HepG2 (cell line): ENCODE measurements at regions of chr4 and their contacts with region 1.

Region 1: DNA sequence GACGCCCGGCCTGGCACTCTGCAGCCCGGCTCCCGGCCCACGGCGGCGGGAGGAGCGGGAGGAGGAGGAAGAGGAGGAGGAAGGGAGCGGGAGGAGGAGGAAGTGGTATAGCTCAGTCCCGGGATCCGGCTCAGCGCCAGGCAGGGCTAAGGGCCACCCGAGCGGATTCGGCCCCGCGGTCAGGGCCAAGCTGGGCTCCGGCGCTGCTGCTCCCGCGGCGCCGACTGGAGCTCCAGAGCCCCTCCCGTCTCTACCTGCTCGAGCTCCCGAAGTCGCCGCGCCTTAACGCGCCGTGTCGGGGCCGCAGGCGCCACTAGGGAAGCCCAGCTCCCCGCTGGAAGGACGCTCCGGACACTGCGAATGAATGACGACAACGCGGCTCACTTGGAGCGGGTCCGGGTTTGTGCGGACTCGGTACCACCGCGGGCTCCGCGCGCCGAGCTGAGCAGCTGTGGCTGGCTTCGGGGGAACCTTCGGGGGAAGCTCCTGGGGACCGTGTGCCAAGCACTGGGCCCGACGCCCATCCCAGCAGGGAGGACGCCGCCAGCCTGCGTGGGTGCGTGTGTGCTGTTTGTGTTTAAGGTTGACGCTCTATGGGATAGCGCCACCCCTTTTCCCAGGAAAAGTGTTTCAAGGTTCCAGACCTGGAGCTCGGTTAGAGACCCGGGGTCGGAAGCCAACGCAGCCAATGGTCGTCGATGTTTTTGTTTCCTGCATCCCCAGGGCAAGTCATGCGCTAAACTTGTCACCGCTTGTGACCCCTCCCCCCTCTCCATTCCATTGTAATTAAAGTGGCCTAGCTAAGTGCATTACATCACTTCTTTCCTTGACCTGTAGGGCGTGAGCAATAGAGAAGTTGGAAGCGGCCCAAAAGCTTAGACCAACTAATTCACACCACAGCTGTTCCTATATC is at the start of gene TBC1D9:
- DNase-seq: peak; percentile 68
- ATAC-seq: peak; percentile 80
- H3K4me3 ChIP-seq: peak within 1 kb of the TSS; percentile 82 to 91 (median 88)
- H3K27ac ChIP-seq: peak within 1 kb of the TSS; percentile 69
- H3K4me1 ChIP-seq: peaks cover 38% of the 10 kb centered on the region
- H3K27me3 ChIP-seq: no peaks in the 10 kb centered on the region
- CTCF ChIP-seq: peak; percentile 68
- EP300 ChIP-seq: no peak
- POLR2A ChIP-seq: peak; percentile 58 to 77
- RAD21 ChIP-seq: no peak; the same call in 1 of the 2 replicates
- total RNA-seq, gene TBC1D9: 12.2 TPM in 2 replicates

Region 2: DNA sequence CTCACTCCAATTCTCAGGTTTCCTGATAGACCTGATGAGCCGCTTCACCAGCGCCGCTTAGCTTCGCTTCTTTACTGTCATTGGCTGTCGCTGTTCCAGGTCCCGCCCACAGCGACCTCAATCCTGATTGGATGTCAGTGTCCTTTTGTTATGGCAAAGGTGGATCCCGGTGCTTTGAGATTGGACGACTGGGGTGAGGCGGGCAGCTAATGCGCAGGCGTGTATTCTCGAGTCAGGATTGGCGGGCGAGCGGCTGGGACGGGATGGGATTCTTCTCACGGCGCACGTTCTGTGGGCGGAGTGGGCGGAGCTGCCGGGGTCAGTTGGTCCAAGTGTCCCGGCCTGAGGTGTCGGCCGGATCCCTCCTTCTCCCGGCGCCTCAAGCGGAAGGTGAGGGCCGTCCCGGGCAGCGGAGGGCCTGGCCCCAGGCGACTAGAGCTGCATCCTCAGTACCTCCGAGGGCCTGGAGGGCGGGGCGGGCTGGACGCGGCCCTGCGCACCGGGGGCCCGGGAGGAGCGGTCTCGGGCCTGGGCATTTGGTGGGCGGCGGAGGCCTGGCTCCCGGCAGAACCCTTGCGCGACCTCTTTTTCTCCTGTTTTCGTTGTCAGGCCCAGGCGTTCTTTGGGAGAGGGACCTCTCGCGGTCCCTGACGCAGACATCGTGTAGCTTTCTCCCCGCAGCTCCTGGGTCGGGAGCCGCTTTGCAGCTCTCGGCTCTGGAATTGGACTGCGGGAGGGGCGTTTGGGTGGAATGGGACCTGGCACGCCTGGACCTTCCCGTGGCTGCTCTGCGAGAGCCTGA is 383.0 kb before region 1 on chr4 and contains the start of gene SCOC:
- CTCF ChIA-PET with region 1: no interaction called
- POLR2A ChIA-PET with region 1: interaction called, 6 read pairs
- in situ Hi-C with region 1: no loop called
- intact Hi-C with region 1: loop called (anchors 1 kb)
- DNase-seq: peak; percentile 99
- ATAC-seq: peak; percentile 96
- H3K4me3 ChIP-seq: peak within 1 kb of the TSS; percentile 78 to 86 (median 85)
- H3K27ac ChIP-seq: peak within 1 kb of the TSS; percentile 85
- H3K4me1 ChIP-seq: peaks cover 45% of the 10 kb centered on the region
- H3K27me3 ChIP-seq: no peaks in the 10 kb centered on the region
- CTCF ChIP-seq: no peak
- EP300 ChIP-seq: no peak
- POLR2A ChIP-seq: peak in 1 of 2 experiments; percentile 82; a peak in 3 of 4 replicates
- RAD21 ChIP-seq: no peak
- total RNA-seq, gene SCOC: 65.2 and 109 TPM in 2 replicates

Region 3: DNA sequence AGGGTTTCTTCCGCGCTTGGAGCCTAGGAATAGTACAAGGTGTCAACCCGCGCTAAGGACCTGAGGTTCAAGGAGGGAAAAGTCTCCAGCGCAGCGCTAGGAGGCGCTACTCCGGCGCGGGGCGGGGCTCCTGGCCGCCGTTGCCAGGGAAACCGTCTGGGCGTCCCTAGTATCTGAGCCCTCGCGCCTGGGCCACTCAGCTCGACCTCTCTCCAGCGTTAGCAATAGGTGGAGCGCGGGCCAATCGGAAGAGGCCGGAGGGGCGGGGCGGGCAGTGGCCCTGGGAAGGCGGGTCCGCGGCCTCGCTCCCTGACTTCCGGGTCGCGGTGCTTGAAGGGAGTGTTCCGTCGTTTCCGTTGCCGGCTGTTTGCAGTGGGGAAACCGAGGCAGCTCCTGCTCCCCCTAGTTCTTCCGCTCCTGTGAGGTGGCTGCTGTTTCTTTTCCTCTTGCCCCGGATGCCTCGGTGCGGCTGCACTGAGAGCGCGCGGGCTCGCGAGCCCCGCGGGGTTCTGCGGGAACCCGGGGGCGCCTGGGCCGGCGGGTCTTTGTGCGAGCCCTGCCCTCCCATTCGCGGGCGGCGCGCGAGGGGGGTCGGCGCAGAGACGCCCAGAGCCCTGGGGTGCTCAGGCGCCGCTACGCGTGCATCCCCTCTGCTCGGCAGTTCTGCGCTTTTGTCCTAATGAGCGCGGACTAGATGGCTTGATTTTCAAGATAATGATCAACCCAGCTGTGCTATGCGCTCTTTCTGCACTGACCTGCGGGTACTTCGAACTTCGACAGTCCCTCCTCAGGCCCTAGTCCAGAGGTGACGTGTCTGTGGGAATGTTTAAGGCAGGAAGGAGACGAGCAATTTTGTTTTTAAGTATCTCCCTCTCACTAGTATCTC is 232.5 kb before region 1 on chr4 and contains the start of gene ELMOD2:
- CTCF ChIA-PET with region 1: no interaction called
- POLR2A ChIA-PET with region 1: interaction called, 4 read pairs
- in situ Hi-C with region 1: no loop called
- intact Hi-C with region 1: loop called (anchors 10 kb)
- DNase-seq: peak; percentile 95
- ATAC-seq: peak; percentile 99
- H3K4me3 ChIP-seq: peak within 1 kb of the TSS; percentile 76 to 84 (median 84)
- H3K27ac ChIP-seq: peak within 1 kb of the TSS; percentile 90
- H3K4me1 ChIP-seq: peaks cover 26% of the 10 kb centered on the region
- H3K27me3 ChIP-seq: peaks cover 0 to 3% of the 10 kb centered on the region in 2 experiments; a peak in 1 of 5 replicates
- CTCF ChIP-seq: peak; percentile 96
- EP300 ChIP-seq: peak in 1 of 2 experiments; percentile 56; a peak in 2 of 4 replicates
- POLR2A ChIP-seq: peak; percentile 91 to 93
- RAD21 ChIP-seq: peak; percentile 47; the same call in 1 of the 2 replicates
- total RNA-seq, gene ELMOD2: 25.4 and 38.1 TPM in 2 replicates

Region 4: DNA sequence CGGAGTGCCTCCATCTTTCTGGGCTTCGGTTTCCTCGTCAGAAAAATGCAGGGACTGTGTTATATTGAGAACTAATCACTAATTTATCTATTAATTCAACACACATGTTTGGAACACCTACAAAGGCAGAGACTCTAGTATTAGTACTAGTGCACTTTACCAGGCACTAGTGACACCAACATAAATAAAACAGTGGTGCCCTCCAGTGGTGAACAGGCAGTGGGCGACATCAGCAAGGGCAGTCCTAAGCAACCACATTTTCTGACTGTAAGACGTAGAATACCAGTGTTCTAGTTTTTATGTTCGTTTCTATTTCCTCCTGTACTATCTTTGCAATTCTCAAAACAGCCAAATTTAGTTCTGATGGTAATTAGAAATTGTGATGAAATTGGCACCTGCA is 118.7 kb before region 1 on chr4:
- CTCF ChIA-PET with region 1: no interaction called
- POLR2A ChIA-PET with region 1: interaction called, 16 read pairs
- in situ Hi-C with region 1: loop called (anchors 10 kb)
- intact Hi-C with region 1: loop called (anchors 2 kb)
- DNase-seq: peak; percentile 59
- ATAC-seq: peak; percentile 19; the same call in 1 of the 3 replicates
- H3K4me3 ChIP-seq: no peak overlapping the region
- H3K27ac ChIP-seq: no peak overlapping the region
- H3K4me1 ChIP-seq: peaks cover 82% of the 10 kb centered on the region
- H3K27me3 ChIP-seq: no peaks in the 10 kb centered on the region
- CTCF ChIP-seq: peak; percentile 79
- EP300 ChIP-seq: no peak
- POLR2A ChIP-seq: no peak
- RAD21 ChIP-seq: peak; percentile 45; the same call in 1 of the 2 replicates

Region 5: DNA sequence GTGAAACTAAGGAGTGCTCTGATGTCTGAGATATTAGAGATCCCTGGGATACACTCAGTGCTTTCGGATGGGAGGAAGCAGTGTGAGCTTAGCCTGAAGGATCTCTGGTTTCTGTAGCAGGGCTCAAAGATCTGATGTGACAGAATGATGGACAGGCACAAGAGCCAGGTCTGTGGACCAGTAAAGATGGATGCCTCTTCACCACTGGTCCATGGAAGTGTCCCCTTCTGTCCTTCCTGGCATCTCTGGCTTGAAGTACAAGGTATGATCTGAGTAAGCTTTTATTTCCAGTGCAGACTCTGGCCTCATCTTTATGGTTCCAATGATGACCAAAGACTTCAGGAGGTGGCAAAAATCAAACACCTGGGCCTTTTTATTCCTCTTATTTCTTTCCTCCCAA is 88.5 kb before region 1 on chr4:
- CTCF ChIA-PET with region 1: no interaction called
- POLR2A ChIA-PET with region 1: no interaction called
- in situ Hi-C with region 1: no loop called
- intact Hi-C with region 1: no loop called
- DNase-seq: no peak
- ATAC-seq: no peak
- H3K4me3 ChIP-seq: no peak overlapping the region
- H3K27ac ChIP-seq: no peak overlapping the region
- H3K4me1 ChIP-seq: peaks cover 1% of the 10 kb centered on the region; the same call in 1 of the 2 replicates
- H3K27me3 ChIP-seq: no peaks in the 10 kb centered on the region
- CTCF ChIP-seq: no peak
- EP300 ChIP-seq: no peak
- POLR2A ChIP-seq: no peak
- RAD21 ChIP-seq: no peak

Region 6: DNA sequence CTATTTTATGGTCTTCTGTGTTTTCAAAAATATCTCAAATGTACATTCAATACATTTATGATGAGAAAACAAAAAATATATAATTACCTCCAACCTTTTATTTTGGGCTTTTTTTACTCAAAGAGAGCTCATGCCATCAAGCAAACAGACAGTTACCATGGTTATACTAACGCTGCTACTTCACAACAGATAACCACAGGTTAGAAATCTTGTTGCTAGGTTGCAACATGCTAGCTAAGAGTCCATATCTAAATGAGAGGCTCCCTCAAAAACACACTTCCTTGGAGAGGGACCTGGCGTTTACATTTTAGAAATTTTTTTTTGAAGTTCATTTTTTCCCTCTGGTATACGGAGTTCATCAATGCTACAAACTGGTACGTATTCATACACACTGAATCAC is 44.7 kb before region 1 on chr4:
- CTCF ChIA-PET with region 1: no interaction called
- POLR2A ChIA-PET with region 1: interaction called, 16 read pairs
- in situ Hi-C with region 1: no loop called
- intact Hi-C with region 1: loop called (anchors 5 kb)
- DNase-seq: peak; percentile 57
- ATAC-seq: peak; percentile 53
- H3K4me3 ChIP-seq: no peak overlapping the region
- H3K27ac ChIP-seq: peak overlapping the region; percentile 82
- H3K4me1 ChIP-seq: peaks cover 59% of the 10 kb centered on the region
- H3K27me3 ChIP-seq: no peaks in the 10 kb centered on the region
- CTCF ChIP-seq: no peak
- EP300 ChIP-seq: 0 out of 4 replicates have a peak, but pooled peaks of 1 of the 2 experiments have one; percentile 43
- POLR2A ChIP-seq: no peak
- RAD21 ChIP-seq: no peak

Region 7: DNA sequence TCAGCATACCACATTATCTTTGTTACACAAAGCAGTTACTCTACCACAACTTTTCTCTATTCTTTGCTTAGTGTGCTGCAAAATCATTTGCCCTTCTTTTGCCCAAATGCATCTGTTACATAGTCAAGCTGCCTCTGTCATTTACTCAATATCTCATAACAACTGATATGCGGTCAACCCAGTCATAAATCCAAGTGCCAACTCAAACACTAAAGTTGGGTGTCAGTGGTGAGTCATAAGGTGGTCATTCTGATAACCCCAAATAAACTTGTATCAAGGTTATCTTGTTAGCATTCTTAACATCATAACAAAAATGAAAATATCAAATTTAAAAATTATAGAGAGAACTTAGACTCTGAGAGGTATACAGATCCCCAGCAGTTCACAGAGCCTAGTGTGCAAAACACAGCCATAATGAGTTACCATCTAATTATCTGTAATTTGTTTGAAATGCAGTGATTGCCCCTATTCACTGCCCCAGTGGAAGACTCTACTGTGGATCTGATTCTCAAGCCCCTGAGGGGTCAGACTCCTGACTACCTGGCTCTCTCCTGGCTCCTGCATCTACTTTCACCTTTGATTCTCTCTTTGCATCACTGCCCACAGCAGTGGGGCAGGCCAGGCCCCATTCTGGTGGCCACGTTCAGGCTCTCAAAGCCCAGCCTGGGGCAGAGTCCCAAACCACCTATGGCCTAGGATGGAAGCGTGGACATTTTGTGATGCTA is 29.6 kb before region 1 on chr4:
- CTCF ChIA-PET with region 1: no interaction called
- POLR2A ChIA-PET with region 1: interaction called, 11 read pairs
- in situ Hi-C with region 1: no loop called
- intact Hi-C with region 1: no loop called
- DNase-seq: no peak
- ATAC-seq: peak; percentile 21
- H3K4me3 ChIP-seq: no peak overlapping the region
- H3K27ac ChIP-seq: peak overlapping the region; percentile 94
- H3K4me1 ChIP-seq: peaks cover 73% of the 10 kb centered on the region
- H3K27me3 ChIP-seq: no peaks in the 10 kb centered on the region
- CTCF ChIP-seq: no peak
- EP300 ChIP-seq: no peak
- POLR2A ChIP-seq: no peak
- RAD21 ChIP-seq: no peak

Region 8: GRCh38 chr4:140743194-140743931 is 13.2 kb before region 1 on chr4:
- CTCF ChIA-PET with region 1: interaction called, 4 read pairs
- POLR2A ChIA-PET with region 1: interaction called, 10 read pairs
- in situ Hi-C with region 1: no loop called
- intact Hi-C with region 1: no loop called
- DNase-seq: peak; percentile 51
- ATAC-seq: peak; percentile 85
- H3K4me3 ChIP-seq: no peak overlapping the region
- H3K27ac ChIP-seq: peak overlapping the region; percentile 52
- H3K4me1 ChIP-seq: peaks cover 68% of the 10 kb centered on the region
- H3K27me3 ChIP-seq: no peaks in the 10 kb centered on the region
- CTCF ChIP-seq: peak; percentile 57
- EP300 ChIP-seq: no peak
- POLR2A ChIP-seq: no peak
- RAD21 ChIP-seq: no peak; the same call in 1 of the 2 replicates

Region 9: GRCh38 chr4:140829825-140830224 is 73.2 kb after region 1 on chr4:
- CTCF ChIA-PET with region 1: no interaction called
- POLR2A ChIA-PET with region 1: no interaction called
- in situ Hi-C with region 1: no loop called
- intact Hi-C with region 1: no loop called
- DNase-seq: no peak
- ATAC-seq: no peak
- H3K4me3 ChIP-seq: no peak overlapping the region
- H3K27ac ChIP-seq: no peak overlapping the region
- H3K4me1 ChIP-seq: 0 out of 2 replicates have a peak, but pooled peaks cover 4% of the 10 kb centered on the region
- H3K27me3 ChIP-seq: no peaks in the 10 kb centered on the region
- CTCF ChIP-seq: no peak
- EP300 ChIP-seq: no peak
- POLR2A ChIP-seq: no peak
- RAD21 ChIP-seq: no peak